ENCODE measurements at regions of chr9 and their contacts with region 1.

Region 1: GRCh38 chr9:96854073-96854876 is at the start of gene ZNF782:
- DNase-seq: peak; percentile 66 to 84 (median 77)
- ATAC-seq: peak; percentile 94
- H3K4me3 ChIP-seq: peak within 1 kb of the TSS; percentile 89
- H3K4me3 Mint-ChIP-seq: peak within 1 kb of the TSS; percentile 90 to 100 (median 100)
- H3K27ac ChIP-seq: peak within 1 kb of the TSS; percentile 83
- H3K27ac Mint-ChIP-seq: peak within 1 kb of the TSS; percentile 89 to 100 (median 97)
- H3K4me1 ChIP-seq: peaks cover 15 to 18% of the 10 kb centered on the region in 2 donors
- H3K4me1 Mint-ChIP-seq: peaks cover 28 to 54% (median 42%) of the 10 kb centered on the region in 7 donors
- H3K27me3 ChIP-seq: no peaks in the 10 kb centered on the region
- H3K27me3 Mint-ChIP-seq: peaks cover 0 to 22% (median 0%) of the 10 kb centered on the region in 5 donors
- total RNA-seq, gene ZNF782: 6.2 to 12.4 (median 8.2) TPM

Region 2: GRCh38 chr9:95317119-95317892 is 1537.0 kb before region 1 on chr9 and contains the start of gene FANCC:
- CTCF ChIA-PET with region 1: interaction called, 4 read pairs
- POLR2A ChIA-PET with region 1: no interaction called
- intact Hi-C with region 1: loop called in 1 of 2 experiments (anchors 5 kb)
- DNase-seq: peak; percentile 74 to 89 (median 81)
- ATAC-seq: peak; percentile 94
- H3K4me3 ChIP-seq: peak within 1 kb of the TSS; percentile 85
- H3K4me3 Mint-ChIP-seq: peak within 1 kb of the TSS; percentile 78 to 95 (median 92)
- H3K27ac ChIP-seq: peak within 1 kb of the TSS; percentile 91
- H3K27ac Mint-ChIP-seq: peak within 1 kb of the TSS; percentile 75 to 95 (median 89)
- H3K4me1 ChIP-seq: peaks cover 3 to 7% of the 10 kb centered on the region in 2 donors
- H3K4me1 Mint-ChIP-seq: peaks cover 8 to 33% (median 23%) of the 10 kb centered on the region in 7 donors
- H3K27me3 ChIP-seq: no peaks in the 10 kb centered on the region
- H3K27me3 Mint-ChIP-seq: peaks cover 0 to 26% (median 0%) of the 10 kb centered on the region in 5 donors
- total RNA-seq, gene FANCC: 5.7 to 14.6 (median 7.9) TPM

Region 3: DNA sequence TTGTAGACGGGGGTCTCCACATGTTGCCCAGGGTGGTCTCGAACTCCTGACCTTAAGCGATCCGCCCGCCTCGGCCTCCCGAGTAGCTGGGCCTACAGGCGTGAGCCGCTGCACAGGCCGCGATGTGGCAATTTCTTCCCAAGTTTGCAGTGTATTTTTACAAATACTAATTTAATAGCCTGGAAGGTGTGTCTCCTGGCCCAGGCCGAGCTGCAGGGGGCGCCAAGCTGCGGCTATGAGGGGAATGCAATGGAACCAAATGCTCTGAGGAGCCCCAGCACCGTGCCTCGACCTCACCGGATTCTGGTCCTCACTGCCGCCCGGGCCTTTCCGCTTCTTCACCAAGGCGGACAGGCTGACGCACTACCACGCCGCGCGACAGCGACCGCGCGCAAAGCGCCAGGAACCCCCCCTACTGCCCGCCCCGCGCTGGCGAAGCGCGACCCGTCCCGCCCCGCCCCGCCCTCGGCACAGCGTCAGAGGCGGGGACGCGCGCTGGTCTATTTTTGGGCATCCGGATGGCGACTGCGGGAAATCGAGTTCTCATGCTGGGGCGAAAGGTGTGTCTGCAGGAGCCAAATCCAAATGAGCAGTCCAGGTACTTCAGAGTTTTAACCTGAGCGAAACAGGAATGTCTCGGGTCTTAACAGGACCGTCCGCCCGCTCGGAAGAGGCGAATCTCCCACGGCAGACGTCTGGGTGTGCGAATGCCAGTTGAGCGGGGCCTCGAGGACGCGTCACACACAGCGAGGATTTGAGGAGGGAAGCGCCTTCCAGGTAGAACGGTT is 167.5 kb before region 1 on chr9:
- CTCF ChIA-PET with region 1: no interaction called
- POLR2A ChIA-PET with region 1: no interaction called
- intact Hi-C with region 1: loop called in 1 of 2 experiments (anchors 1 kb)
- DNase-seq: peak; percentile 54 to 81 (median 78)
- ATAC-seq: peak; percentile 96
- H3K4me3 ChIP-seq: peak overlapping the region; percentile 69
- H3K4me3 Mint-ChIP-seq: peak overlapping the region; percentile 73 to 95 (median 87)
- H3K27ac ChIP-seq: peak overlapping the region; percentile 67
- H3K27ac Mint-ChIP-seq: peak overlapping the region in 6 of 9 donors; percentile 42 to 81 (median 66)
- H3K4me1 ChIP-seq: no peaks in the 10 kb centered on the region
- H3K4me1 Mint-ChIP-seq: peaks cover 0 to 16% (median 7%) of the 10 kb centered on the region in 7 donors
- H3K27me3 ChIP-seq: no peaks in the 10 kb centered on the region
- H3K27me3 Mint-ChIP-seq: peaks cover 0 to 7% (median 6%) of the 10 kb centered on the region in 5 donors

Region 4: DNA sequence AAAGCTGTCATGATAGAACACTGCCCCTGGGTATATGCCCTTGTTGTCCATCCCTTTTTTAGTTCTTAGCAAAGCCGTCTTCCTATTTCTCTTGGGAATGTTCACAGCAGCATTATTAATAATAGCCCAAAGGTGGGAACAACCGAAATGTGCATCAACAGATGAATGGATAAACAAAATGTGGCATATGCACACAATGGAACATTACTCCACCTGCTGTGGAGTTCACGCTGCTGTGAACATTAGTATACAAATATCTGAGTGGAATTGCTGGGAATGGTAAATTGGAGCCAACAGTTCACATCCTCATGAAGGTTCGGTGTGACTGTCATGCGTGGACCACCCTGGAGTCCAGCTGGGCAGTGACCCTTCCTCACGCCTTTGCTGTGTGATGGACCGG is 37.9 kb after region 1 on chr9:
- CTCF ChIA-PET with region 1: no interaction called
- POLR2A ChIA-PET with region 1: no interaction called
- intact Hi-C with region 1: no loop called
- DNase-seq: no peak
- ATAC-seq: no peak
- H3K4me3 ChIP-seq: no peak overlapping the region
- H3K4me3 Mint-ChIP-seq: no peak overlapping the region
- H3K27ac ChIP-seq: no peak overlapping the region
- H3K27ac Mint-ChIP-seq: peak overlapping the region in 1 of 9 donors; percentile 5
- H3K4me1 ChIP-seq: no peaks in the 10 kb centered on the region
- H3K4me1 Mint-ChIP-seq: no peaks in the 10 kb centered on the region
- H3K27me3 ChIP-seq: no peaks in the 10 kb centered on the region
- H3K27me3 Mint-ChIP-seq: no peaks in the 10 kb centered on the region

Region 5: DNA sequence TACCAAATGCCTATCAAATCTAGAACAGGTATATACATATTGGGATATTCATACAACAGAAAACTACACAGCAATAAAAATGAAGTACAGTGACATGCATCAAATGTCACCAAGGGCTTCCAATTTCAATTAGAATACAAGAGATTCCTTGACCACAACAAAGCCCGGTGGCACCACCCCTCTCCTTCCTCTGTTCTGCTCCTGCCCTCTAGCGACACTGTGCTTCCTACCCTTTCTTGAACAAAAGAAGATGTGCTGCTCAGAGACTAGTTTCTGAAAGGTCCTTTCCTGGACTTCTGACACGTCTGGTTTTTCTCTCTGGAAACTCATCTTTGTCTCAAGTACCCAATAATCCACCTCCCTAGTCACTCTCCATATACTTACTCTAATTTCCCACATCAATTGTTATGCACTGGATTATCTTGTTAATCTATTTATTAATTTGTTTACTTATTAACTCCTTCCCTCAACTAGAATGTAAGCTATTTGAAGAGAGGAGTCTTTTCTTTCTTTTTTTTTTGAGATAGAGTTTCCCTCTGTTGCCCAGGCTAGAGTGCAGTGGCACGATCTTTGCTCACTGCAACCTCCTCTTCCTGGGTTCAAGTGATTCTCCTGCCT is 255.0 kb after region 1 on chr9:
- CTCF ChIA-PET with region 1: no interaction called
- POLR2A ChIA-PET with region 1: no interaction called
- intact Hi-C with region 1: loop called (anchors 1 to 2 kb)
- DNase-seq: peak in 2 of 9 donors; percentile 7 to 19
- ATAC-seq: peak; percentile 45
- H3K4me3 ChIP-seq: no peak overlapping the region
- H3K4me3 Mint-ChIP-seq: no peak overlapping the region
- H3K27ac ChIP-seq: no peak overlapping the region
- H3K27ac Mint-ChIP-seq: no peak overlapping the region
- H3K4me1 ChIP-seq: no peaks in the 10 kb centered on the region
- H3K4me1 Mint-ChIP-seq: peaks cover 0 to 6% (median 4%) of the 10 kb centered on the region in 7 donors
- H3K27me3 ChIP-seq: no peaks in the 10 kb centered on the region
- H3K27me3 Mint-ChIP-seq: peaks cover 0 to 11% (median 7%) of the 10 kb centered on the region in 5 donors

Region 6: DNA sequence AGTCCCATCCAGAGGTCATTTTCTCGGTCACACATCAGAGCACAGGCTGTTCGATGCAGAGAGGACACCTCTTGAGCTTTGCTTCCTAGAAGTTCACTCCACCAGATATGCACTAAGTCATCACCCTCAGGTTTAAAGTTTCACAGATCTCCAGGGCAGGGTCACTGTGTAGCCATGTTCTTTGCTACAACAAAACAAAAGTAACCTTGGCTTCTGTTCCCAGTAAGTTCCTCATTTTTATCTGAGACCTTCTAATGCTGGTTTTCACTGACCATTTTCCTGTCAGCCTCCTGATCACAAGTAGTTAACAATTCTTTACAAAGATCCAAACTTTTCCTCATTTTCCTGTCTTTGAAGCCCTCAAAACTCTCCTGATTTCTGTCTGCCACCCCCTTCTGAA is 282.1 kb after region 1 on chr9:
- CTCF ChIA-PET with region 1: no interaction called
- POLR2A ChIA-PET with region 1: no interaction called
- intact Hi-C with region 1: no loop called
- DNase-seq: no peak
- ATAC-seq: no peak
- H3K4me3 ChIP-seq: no peak overlapping the region
- H3K4me3 Mint-ChIP-seq: no peak overlapping the region
- H3K27ac ChIP-seq: no peak overlapping the region
- H3K27ac Mint-ChIP-seq: no peak overlapping the region
- H3K4me1 ChIP-seq: no peaks in the 10 kb centered on the region
- H3K4me1 Mint-ChIP-seq: peaks cover 0 to 1% (median 0%) of the 10 kb centered on the region in 7 donors
- H3K27me3 ChIP-seq: no peaks in the 10 kb centered on the region
- H3K27me3 Mint-ChIP-seq: peaks cover 0 to 7% (median 0%) of the 10 kb centered on the region in 5 donors

Region 7: DNA sequence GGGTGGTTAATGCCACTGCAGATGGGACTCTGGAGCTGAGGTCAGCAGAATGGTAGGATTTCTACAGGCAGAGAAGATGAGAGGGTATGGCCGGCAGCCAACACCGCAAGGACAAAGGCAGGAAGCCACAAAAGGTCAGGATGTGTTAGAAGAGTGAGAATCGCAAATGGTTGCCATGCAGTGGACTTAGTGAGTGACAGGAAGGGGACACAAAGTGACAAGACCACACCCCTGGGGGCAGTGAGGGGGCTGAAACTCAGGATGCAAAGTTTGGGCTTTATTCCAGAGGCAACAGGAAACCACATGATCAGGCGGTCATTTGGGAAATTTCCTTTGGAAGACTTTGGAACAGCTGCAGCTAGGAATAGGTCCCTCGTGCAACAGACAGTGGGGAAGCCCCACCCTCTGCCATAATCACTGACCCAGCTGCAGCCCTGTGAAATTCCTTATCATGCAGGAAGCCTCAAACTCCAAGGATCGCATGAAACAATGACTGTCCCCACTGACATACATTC is 439.0 kb after region 1 on chr9:
- CTCF ChIA-PET with region 1: no interaction called
- POLR2A ChIA-PET with region 1: no interaction called
- intact Hi-C with region 1: loop called in 1 of 2 experiments (anchors 5 kb)
- DNase-seq: no peak
- ATAC-seq: no peak
- H3K4me3 ChIP-seq: no peak overlapping the region
- H3K4me3 Mint-ChIP-seq: no peak overlapping the region
- H3K27ac ChIP-seq: no peak overlapping the region
- H3K27ac Mint-ChIP-seq: no peak overlapping the region
- H3K4me1 ChIP-seq: no peaks in the 10 kb centered on the region
- H3K4me1 Mint-ChIP-seq: peaks cover 0 to 5% (median 0%) of the 10 kb centered on the region in 7 donors
- H3K27me3 ChIP-seq: no peaks in the 10 kb centered on the region
- H3K27me3 Mint-ChIP-seq: peaks cover 0 to 5% (median 0%) of the 10 kb centered on the region in 5 donors

Region 8: GRCh38 chr9:97598461-97599288 is 744.4 kb after region 1 on chr9:
- CTCF ChIA-PET with region 1: interaction called, 8 read pairs
- POLR2A ChIA-PET with region 1: interaction called, 3 read pairs
- intact Hi-C with region 1: loop called (anchors 1 kb)
- DNase-seq: peak; percentile 26 to 73 (median 67)
- ATAC-seq: peak; percentile 93
- H3K4me3 ChIP-seq: no peak overlapping the region
- H3K4me3 Mint-ChIP-seq: peak overlapping the region in 9 of 10 donors; percentile 19 to 73 (median 60)
- H3K27ac ChIP-seq: no peak overlapping the region
- H3K27ac Mint-ChIP-seq: peak overlapping the region in 4 of 9 donors; percentile 4 to 49 (median 20)
- H3K4me1 ChIP-seq: peaks cover 4% of the 10 kb centered on the region in 2 donors
- H3K4me1 Mint-ChIP-seq: peaks cover 6 to 8% (median 6%) of the 10 kb centered on the region in 7 donors
- H3K27me3 ChIP-seq: no peaks in the 10 kb centered on the region
- H3K27me3 Mint-ChIP-seq: peaks cover 0 to 2% (median 0%) of the 10 kb centered on the region in 5 donors